ENCODE measurements at regions of chr5 and their contacts with region 1.

Region 1: DNA sequence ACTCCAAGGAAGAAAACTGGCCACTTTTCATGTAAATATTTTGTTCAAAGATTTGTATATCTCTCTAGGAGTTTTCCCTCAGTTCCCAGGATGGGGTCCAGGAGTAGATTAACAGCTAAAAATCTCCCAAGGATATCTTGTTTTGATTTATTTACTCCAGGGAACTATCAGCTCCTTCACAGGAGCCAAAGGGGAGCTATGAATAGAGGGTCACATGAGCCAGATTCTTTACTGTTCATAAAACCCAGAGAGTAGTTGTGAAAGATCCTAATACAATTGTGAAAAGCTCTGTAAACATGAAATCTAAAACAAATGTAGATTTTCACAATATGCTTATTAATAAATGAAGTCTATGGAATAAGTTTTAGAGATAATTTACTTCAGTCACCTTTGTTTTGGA is 16.9 kb downstream of the DIMT1 start:
- DNase-seq: no peak
- ATAC-seq: no peak
- H3K4me3 ChIP-seq: no peak overlapping the region
- H3K27ac ChIP-seq: no peak overlapping the region
- H3K4me1 ChIP-seq: peaks cover 16% of the 10 kb centered on the region
- H3K27me3 ChIP-seq: no peaks in the 10 kb centered on the region
- CTCF ChIP-seq: no peak
- EP300 ChIP-seq: no peak
- POLR2A ChIP-seq: no peak
- RAD21 ChIP-seq: no peak

Region 2: GRCh38 chr5:62403434-62404250 is 16.8 kb after region 1 on chr5 and contains the start of gene DIMT1:
- CTCF ChIA-PET with region 1: no interaction called
- POLR2A ChIA-PET with region 1: interaction called, 11 read pairs
- in situ Hi-C with region 1: no loop called
- intact Hi-C with region 1: no loop called
- DNase-seq: peak; percentile 95
- ATAC-seq: peak; percentile 99
- H3K4me3 ChIP-seq: peak within 1 kb of the TSS; percentile 75 to 88 (median 79)
- H3K27ac ChIP-seq: peak within 1 kb of the TSS; percentile 91
- H3K4me1 ChIP-seq: peaks cover 24% of the 10 kb centered on the region
- H3K27me3 ChIP-seq: no peaks in the 10 kb centered on the region
- CTCF ChIP-seq: 0 out of 2 replicates have a peak, but pooled peaks have one; percentile 6
- EP300 ChIP-seq: no peak
- POLR2A ChIP-seq: peak; percentile 87 to 99
- RAD21 ChIP-seq: peak; percentile 44; the same call in 1 of the 2 replicates
- total RNA-seq, gene DIMT1: 35.2 and 37.7 TPM in 2 replicates

Measured in HepG2 (cell line).